GM12878 (cell line): ENCODE measurements at regions of chr7 and their contacts with region 1.

Region 1: DNA sequence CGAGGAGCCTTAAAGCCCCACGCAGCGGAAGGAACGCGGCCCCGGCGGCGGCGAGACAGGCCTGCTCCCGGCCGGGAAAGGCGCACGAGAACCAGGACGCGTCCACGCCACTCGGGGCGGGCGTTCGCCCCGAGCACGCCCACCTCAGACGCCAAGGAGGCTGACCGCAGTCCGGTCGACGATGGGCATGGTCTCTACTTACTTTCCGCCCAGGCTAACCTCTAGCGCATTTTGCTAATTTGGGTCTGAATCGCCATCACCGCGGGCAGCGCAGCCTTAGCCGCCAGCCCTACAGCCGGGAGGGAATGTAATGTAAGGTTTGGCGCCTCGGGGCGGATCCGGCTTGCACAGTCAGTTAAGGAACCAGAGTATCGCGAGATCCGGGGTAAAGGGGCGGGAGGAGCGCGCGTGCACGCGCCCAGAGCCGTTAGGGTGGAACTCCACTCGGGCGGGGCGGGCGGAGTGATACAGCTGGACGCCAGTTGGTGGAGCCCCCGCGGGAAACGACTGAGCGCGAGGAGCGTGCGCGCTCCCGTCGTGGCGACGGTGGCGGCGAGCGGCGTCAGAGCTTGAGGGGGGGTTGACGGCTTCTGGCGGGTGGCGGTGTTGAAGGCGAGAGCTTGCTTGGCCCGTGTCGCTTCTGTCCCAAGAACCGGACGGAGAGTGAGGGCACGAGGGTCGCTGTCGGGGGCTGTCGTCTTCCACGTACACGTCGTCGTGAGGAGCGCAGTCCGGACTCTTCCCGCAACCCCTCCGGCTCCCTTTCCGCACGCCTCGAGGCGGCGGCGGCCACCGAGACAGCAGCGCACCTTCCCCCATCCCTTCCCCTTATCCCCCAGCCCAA is at the start of gene LUC7L2:
- DNase-seq: peak; percentile 94
- ATAC-seq: peak; percentile 84
- H3K4me3 ChIP-seq: peak within 1 kb of the TSS; percentile 95
- H3K27ac ChIP-seq: peak within 1 kb of the TSS; percentile 98
- H3K4me1 ChIP-seq: no peaks in the 10 kb centered on the region
- H3K27me3 ChIP-seq: no peaks in the 10 kb centered on the region
- CTCF ChIP-seq: peak in 1 of 3 experiments; percentile 7; a peak in 2 of 6 replicates
- EP300 ChIP-seq: peak in 1 of 2 experiments; percentile 36; a peak in 1 of 4 replicates
- POLR2A ChIP-seq: peak; percentile 97
- RAD21 ChIP-seq: no peak
- polyA plus RNA-seq, gene LUC7L2: 31.7 to 37.8 TPM

Region 2: GRCh38 chr7:139340037-139340807 is 19.4 kb before region 1 on chr7:
- CTCF ChIA-PET with region 1: interaction called, 7 read pairs
- POLR2A ChIA-PET with region 1: interaction called, 5 read pairs
- RAD21 ChIA-PET with region 1: interaction called, 3 read pairs
- SMC1A ChIA-PET with region 1: interaction called, 9 read pairs
- in situ Hi-C with region 1: no loop called
- intact Hi-C with region 1: loop called (anchors 1 kb)
- DNase-seq: peak; percentile 100
- ATAC-seq: peak; percentile 85
- H3K4me3 ChIP-seq: peak overlapping the region; percentile 84
- H3K27ac ChIP-seq: peak overlapping the region; percentile 97
- H3K4me1 ChIP-seq: no peaks in the 10 kb centered on the region
- H3K27me3 ChIP-seq: no peaks in the 10 kb centered on the region
- CTCF ChIP-seq: peak; percentile 54 to 81 (median 68)
- EP300 ChIP-seq: peak; percentile 8 to 76; a peak in 3 of 4 replicates
- POLR2A ChIP-seq: peak; percentile 10; the same call in 1 of the 2 replicates
- RAD21 ChIP-seq: peak; percentile 35; the same call in 1 of the 2 replicates